T-cell (primary cell): ENCODE measurements at regions of chr4 and their contacts with region 1.

Region 1: GRCh38 chr4:26048378-26048882 is 134.4 kb downstream of the SMIM20 start:
- DNase-seq: no peak
- ATAC-seq: no peak
- H3K4me3 ChIP-seq: no peak overlapping the region
- H3K4me3 Mint-ChIP-seq: no peak overlapping the region
- H3K27ac ChIP-seq: no peak overlapping the region
- H3K27ac Mint-ChIP-seq: no peak overlapping the region
- H3K4me1 ChIP-seq: no peaks in the 10 kb centered on the region
- H3K4me1 Mint-ChIP-seq: peaks cover 0 to 3% (median 0%) of the 10 kb centered on the region in 3 donors
- H3K27me3 ChIP-seq: peaks cover 0 to 17% of the 10 kb centered on the region in 2 experiments
- H3K27me3 Mint-ChIP-seq: peaks cover 5 to 19% of the 10 kb centered on the region in 2 donors

Region 2: GRCh38 chr4:26509681-26510333 is 461.4 kb after region 1 on chr4:
- CTCF ChIA-PET with region 1: no interaction called
- POLR2A ChIA-PET with region 1: no interaction called
- DNase-seq: no peak
- ATAC-seq: no peak
- H3K4me3 ChIP-seq: no peak overlapping the region
- H3K4me3 Mint-ChIP-seq: no peak overlapping the region
- H3K27ac ChIP-seq: no peak overlapping the region
- H3K27ac Mint-ChIP-seq: no peak overlapping the region
- H3K4me1 ChIP-seq: no peaks in the 10 kb centered on the region
- H3K4me1 Mint-ChIP-seq: no peaks in the 10 kb centered on the region
- H3K27me3 ChIP-seq: no peaks in the 10 kb centered on the region
- H3K27me3 Mint-ChIP-seq: peaks cover 0 to 2% of the 10 kb centered on the region in 2 donors

Region 3: GRCh38 chr4:26529479-26529878 is 481.0 kb after region 1 on chr4:
- CTCF ChIA-PET with region 1: interaction called in 1 of 2 experiments, 10 read pairs
- POLR2A ChIA-PET with region 1: no interaction called
- DNase-seq: no peak
- ATAC-seq: no peak
- H3K4me3 ChIP-seq: no peak overlapping the region
- H3K4me3 Mint-ChIP-seq: no peak overlapping the region
- H3K27ac ChIP-seq: no peak overlapping the region
- H3K27ac Mint-ChIP-seq: no peak overlapping the region
- H3K4me1 ChIP-seq: no peaks in the 10 kb centered on the region
- H3K4me1 Mint-ChIP-seq: no peaks in the 10 kb centered on the region
- H3K27me3 ChIP-seq: no peaks in the 10 kb centered on the region
- H3K27me3 Mint-ChIP-seq: no peaks in the 10 kb centered on the region